H1 (cell line): ENCODE measurements at regions of chr12 and their contacts with region 1.

Region 1: GRCh38 chr12:107992870-107993451 is 136.1 kb upstream of the WSCD2 start:
- DNase-seq: peak; percentile 36 to 60
- H3K4me3 ChIP-seq: no peak overlapping the region
- H3K27ac ChIP-seq: no peak overlapping the region
- H3K4me1 ChIP-seq: no peaks in the 10 kb centered on the region
- H3K27me3 ChIP-seq: no peaks in the 10 kb centered on the region; a peak in 1 of 7 replicates
- CTCF ChIP-seq: peak; percentile 26 to 86 (median 82)
- EP300 ChIP-seq: no peak
- POLR2A ChIP-seq: no peak
- RAD21 ChIP-seq: peak; percentile 71 to 72

Region 2: GRCh38 chr12:107580750-107581618 is 412.0 kb before region 1 on chr12:
- CTCF ChIA-PET with region 1: no interaction called
- POLR2A ChIA-PET with region 1: no interaction called
- DNase-seq: peak in 1 of 2 experiments; percentile 59
- H3K4me3 ChIP-seq: peak overlapping the region; percentile 19 to 56 (median 26); a peak in 7 of 8 replicates
- H3K27ac ChIP-seq: no peak overlapping the region
- H3K4me1 ChIP-seq: peaks cover 7 to 24% (median 12%) of the 10 kb centered on the region in 4 experiments; a peak in 6 of 7 replicates
- H3K27me3 ChIP-seq: peaks cover 0 to 23% (median 15%) of the 10 kb centered on the region in 4 experiments; a peak in 5 of 7 replicates
- CTCF ChIP-seq: no peak
- EP300 ChIP-seq: no peak
- POLR2A ChIP-seq: no peak
- RAD21 ChIP-seq: no peak

Region 3: DNA sequence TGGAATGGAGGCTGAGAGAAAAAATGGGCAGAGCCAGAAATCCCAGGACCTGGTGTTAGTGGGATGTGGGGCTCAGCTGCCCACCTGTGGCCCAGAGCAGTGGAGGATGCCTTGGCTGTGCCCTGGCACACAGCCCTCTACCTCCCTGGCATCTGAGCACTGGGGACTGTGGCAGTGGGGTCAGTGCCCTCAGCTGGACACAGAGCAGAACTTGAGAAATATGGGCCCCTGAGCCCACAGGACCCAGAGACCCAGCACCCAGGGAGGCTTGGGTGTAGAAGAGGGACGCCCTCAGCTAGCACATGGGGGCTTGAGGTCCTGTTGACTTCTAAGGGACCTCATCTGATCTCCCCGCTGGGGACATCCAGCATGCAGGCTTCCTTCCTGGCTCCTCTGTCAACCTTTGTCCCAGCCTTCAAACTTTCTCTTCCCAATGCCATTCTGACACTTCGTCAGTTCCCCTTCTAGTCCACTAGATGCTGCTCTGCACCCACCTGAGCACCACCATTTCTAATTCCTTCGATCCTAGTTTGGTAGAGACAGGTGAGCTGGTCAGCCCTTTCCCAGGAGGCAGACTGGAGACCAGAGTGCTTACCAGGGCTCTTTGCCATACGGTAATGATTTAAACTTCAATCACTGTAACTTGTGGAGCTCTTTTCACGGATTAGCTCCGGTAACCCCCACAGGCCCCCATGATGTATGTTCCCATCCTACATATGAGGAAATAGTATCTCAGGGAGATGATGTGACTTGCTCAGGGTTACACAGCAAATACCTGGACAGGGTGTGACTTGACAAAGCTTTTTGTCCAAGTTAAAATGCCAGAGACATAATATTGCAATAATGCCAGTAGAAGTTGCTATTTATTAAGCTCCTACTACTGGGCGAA is 74.8 kb before region 1 on chr12:
- CTCF ChIA-PET with region 1: interaction called, 13 read pairs
- POLR2A ChIA-PET with region 1: no interaction called
- DNase-seq: peak in 1 of 2 experiments; percentile 21
- H3K4me3 ChIP-seq: no peak overlapping the region
- H3K27ac ChIP-seq: no peak overlapping the region
- H3K4me1 ChIP-seq: no peaks in the 10 kb centered on the region
- H3K27me3 ChIP-seq: peaks cover 0 to 3% (median 0%) of the 10 kb centered on the region in 4 experiments; a peak in 1 of 7 replicates
- CTCF ChIP-seq: peak; percentile 69 to 97 (median 85)
- EP300 ChIP-seq: no peak
- POLR2A ChIP-seq: no peak
- RAD21 ChIP-seq: peak; percentile 97 to 98

Region 4: DNA sequence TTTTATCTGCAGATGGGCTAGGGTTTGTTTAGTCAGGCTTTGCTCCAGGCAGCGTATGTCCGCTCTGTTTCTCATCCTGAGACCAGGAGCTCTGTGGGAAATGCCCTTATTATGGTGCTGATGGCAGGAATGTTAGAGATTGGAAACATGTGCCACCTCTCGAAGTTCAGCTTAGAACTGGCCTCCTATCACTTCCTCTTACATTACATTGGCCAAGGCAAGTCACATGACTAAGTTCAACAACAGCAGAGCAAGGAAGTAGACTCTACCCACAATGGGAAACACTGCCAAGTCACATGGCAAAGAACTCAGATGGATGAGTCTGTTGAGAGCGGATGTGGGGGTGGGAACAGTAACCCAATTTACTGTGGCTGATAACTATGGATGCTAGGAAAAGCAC is 25.8 kb before region 1 on chr12:
- CTCF ChIA-PET with region 1: interaction called, 21 read pairs
- POLR2A ChIA-PET with region 1: no interaction called
- DNase-seq: no peak
- H3K4me3 ChIP-seq: no peak overlapping the region
- H3K27ac ChIP-seq: no peak overlapping the region
- H3K4me1 ChIP-seq: no peaks in the 10 kb centered on the region
- H3K27me3 ChIP-seq: peaks cover 0 to 1% (median 0%) of the 10 kb centered on the region in 4 experiments; a peak in 1 of 7 replicates
- CTCF ChIP-seq: no peak
- EP300 ChIP-seq: no peak
- POLR2A ChIP-seq: no peak
- RAD21 ChIP-seq: no peak

Region 5: GRCh38 chr12:108029051-108029835 is 36.3 kb after region 1 on chr12:
- CTCF ChIA-PET with region 1: interaction called, 18 read pairs
- POLR2A ChIA-PET with region 1: no interaction called
- DNase-seq: no peak
- H3K4me3 ChIP-seq: no peak overlapping the region
- H3K27ac ChIP-seq: no peak overlapping the region
- H3K4me1 ChIP-seq: peaks cover 0 to 9% (median 4%) of the 10 kb centered on the region in 4 experiments; a peak in 4 of 7 replicates
- H3K27me3 ChIP-seq: peaks cover 0 to 12% (median 4%) of the 10 kb centered on the region in 4 experiments; a peak in 4 of 7 replicates
- CTCF ChIP-seq: no peak
- EP300 ChIP-seq: no peak
- POLR2A ChIP-seq: no peak
- RAD21 ChIP-seq: no peak

Region 6: DNA sequence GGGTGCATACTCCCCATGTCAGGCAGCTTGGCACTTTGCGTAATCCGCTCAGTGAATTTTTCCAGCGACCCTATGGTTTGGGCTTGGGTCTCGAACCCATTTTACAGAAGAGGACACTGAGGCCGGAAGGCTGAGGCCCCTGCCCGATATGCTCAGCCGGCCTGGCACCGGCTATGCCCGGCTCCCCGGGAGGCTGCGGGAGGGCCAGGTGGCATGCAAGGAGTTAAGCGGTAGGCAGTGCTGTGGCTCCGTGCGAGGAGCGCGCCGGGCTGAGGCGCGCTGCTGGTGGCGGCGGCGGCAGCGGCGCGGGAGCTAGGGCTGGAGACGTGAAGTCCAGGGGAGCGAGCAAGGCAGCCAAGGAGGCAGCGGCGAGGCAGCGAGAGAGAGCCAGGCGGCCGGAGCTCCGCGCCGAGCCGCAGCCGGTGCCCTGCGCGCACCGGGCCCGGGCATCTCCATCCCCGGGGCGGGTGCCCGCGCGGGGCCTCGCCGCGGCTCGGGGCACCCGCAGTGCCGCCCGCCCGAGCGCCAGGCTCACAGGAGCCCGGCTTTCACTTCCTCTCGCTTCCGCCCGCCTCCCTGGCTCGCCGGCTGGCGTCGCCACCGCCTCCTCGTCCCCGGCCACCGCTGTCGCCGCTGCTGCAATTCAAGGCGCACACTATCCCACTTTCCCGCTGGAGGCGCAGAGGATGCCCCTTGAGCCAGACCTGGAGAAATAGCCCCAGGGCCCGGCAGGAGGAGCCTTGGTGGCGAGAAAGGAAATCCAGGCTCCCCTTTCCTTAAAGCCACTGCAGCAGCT is 136.3 kb after region 1 on chr12 and contains the start of gene WSCD2:
- CTCF ChIA-PET with region 1: interaction called, 11 read pairs
- POLR2A ChIA-PET with region 1: no interaction called
- DNase-seq: peak; percentile 67 to 85
- H3K4me3 ChIP-seq: peak within 1 kb of the TSS; percentile 50 to 73 (median 66)
- H3K27ac ChIP-seq: no peak within 1 kb of the TSS
- H3K4me1 ChIP-seq: peaks cover 0 to 19% (median 2%) of the 10 kb centered on the region in 4 experiments; a peak in 4 of 7 replicates
- H3K27me3 ChIP-seq: peaks cover 0 to 14% (median 6%) of the 10 kb centered on the region in 4 experiments; a peak in 3 of 7 replicates
- CTCF ChIP-seq: peak; percentile 69 to 96 (median 69)
- EP300 ChIP-seq: no peak
- POLR2A ChIP-seq: 0 out of 3 replicates have a peak, but pooled peaks of 1 of the 2 experiments have one; percentile 43
- RAD21 ChIP-seq: peak; percentile 59 to 79
- total RNA-seq, gene WSCD2: 1.7 and 2.2 TPM in 2 replicates

Region 7: DNA sequence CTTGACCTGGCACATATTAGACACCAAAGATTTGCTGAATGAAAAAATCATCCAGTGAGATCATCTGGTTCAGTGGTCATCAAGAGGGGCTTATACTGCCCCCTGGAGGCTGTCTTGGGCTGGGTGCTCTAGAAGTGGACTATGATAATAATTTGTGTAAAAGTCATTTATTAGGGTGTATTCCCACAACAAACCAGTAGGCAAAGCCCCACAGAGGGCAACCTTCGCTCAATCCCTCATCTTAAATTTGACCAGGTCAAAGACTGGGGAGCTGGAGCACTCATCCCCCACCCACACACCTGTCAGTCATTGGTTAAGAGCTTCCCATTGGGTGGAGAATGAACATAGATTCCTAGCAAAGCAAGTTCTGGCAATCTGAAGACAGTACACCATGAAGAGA is 502.1 kb after region 1 on chr12:
- CTCF ChIA-PET with region 1: interaction called, 51 read pairs
- POLR2A ChIA-PET with region 1: no interaction called
- DNase-seq: peak in 1 of 2 experiments; percentile 80
- H3K4me3 ChIP-seq: no peak overlapping the region
- H3K27ac ChIP-seq: no peak overlapping the region
- H3K4me1 ChIP-seq: no peaks in the 10 kb centered on the region
- H3K27me3 ChIP-seq: no peaks in the 10 kb centered on the region
- CTCF ChIP-seq: peak; percentile 45 to 84 (median 76)
- EP300 ChIP-seq: no peak
- POLR2A ChIP-seq: no peak
- RAD21 ChIP-seq: peak; percentile 87 to 89